ENCODE measurements at regions of chr1 and their contacts with region 1.

Region 1: DNA sequence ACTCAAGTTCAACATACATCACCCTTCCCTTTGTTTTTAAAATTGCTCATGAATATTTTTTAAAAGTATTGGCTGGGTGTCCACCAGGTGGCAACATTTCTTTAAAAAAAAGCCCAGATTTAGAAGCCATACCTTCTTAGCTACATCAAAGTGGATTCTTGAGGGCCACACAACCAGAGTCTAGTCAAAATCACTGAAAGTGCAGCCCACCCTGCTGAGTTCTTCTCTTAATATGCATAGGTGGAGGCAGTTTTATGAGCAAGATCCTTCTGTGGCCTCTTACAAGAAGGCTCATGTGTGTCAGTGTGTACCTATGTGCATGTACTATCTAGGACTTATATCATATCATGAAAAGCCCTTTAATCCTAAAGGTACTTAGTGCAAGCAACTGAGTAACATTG is 16.9 kb upstream of the GNG12 start:
- DNase-seq: peak; percentile 18
- CTCF ChIP-seq: peak; percentile 57

Region 2: GRCh38 chr1:67814121-67814772 is 35.9 kb before region 1 on chr1:
- CTCF ChIA-PET with region 1: interaction called, 13 read pairs
- POLR2A ChIA-PET with region 1: no interaction called
- DNase-seq: no peak
- CTCF ChIP-seq: no peak

Region 3: GRCh38 chr1:67832737-67833601 is 17.2 kb before region 1 on chr1 and contains the start of gene GNG12:
- CTCF ChIA-PET with region 1: interaction called, 16 read pairs
- POLR2A ChIA-PET with region 1: no interaction called
- DNase-seq: peak; percentile 61
- CTCF ChIP-seq: no peak

Region 4: DNA sequence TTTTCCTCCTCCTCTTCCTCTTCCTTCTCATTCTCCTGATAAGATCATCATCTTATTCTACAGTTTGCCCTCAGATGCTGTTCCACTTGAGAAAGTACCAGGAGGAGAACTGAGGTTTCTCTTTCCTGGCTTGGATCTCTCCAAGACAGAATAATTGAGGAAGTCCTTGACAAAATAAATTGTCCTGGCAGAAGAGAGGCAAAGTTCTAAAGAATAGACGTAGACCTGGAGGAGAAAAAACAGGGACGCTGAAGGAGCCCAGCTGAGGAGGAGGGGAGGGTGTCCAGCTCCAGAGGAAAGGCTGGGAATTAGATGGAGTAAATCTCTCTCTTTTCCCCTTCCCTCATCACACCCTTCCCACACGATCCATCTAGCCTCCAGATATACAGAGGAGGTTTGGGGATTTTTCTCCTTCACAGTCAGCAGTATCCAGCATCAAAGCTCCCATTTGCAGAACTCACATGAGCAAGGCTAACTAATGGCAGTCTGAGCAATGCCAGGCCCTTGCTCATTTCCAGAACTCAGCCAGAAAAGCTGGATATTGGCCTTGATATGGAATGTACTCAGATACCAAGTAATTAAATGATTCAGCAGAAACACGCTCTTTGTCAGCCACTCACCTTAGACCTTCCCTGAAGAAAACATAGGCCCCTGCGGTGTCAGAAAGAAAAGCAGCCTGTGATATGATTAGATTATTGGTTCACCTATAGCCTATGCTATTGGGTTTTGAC is 11.8 kb before region 1 on chr1:
- CTCF ChIA-PET with region 1: interaction called, 16 read pairs
- POLR2A ChIA-PET with region 1: no interaction called
- DNase-seq: no peak
- CTCF ChIP-seq: no peak